ENCODE measurements at regions of chr7 and their contacts with region 1.

Region 1: GRCh38 chr7:100101016-100101862 is at the starts of genes AP4M1 and MCM7:
- DNase-seq: peak; percentile 98
- H3K4me3 ChIP-seq: peak within 1 kb of the TSS; percentile 74 to 96 (median 75)
- H3K27ac ChIP-seq: peak within 1 kb of the TSS; percentile 84
- H3K4me1 ChIP-seq: peaks cover 18% of the 10 kb centered on the region
- H3K27me3 ChIP-seq: no peaks in the 10 kb centered on the region
- CTCF ChIP-seq: no peak
- POLR2A ChIP-seq: peak; percentile 38
- total RNA-seq, gene AP4M1: 20.5 and 22.7 TPM in 2 replicates
- total RNA-seq, gene MCM7: 183 and 187 TPM in 2 replicates

Region 2: GRCh38 chr7:99848420-99849216 is 252.6 kb before region 1 on chr7:
- CTCF ChIA-PET with region 1: no interaction called
- POLR2A ChIA-PET with region 1: no interaction called
- dilution Hi-C with region 1: no loop called
- intact Hi-C with region 1: no loop called
- DNase-seq: no peak
- H3K4me3 ChIP-seq: no peak overlapping the region
- H3K27ac ChIP-seq: no peak overlapping the region
- H3K4me1 ChIP-seq: no peaks in the 10 kb centered on the region
- H3K27me3 ChIP-seq: peaks cover 2 to 4% of the 10 kb centered on the region in 2 experiments
- CTCF ChIP-seq: no peak
- POLR2A ChIP-seq: no peak

Region 3: DNA sequence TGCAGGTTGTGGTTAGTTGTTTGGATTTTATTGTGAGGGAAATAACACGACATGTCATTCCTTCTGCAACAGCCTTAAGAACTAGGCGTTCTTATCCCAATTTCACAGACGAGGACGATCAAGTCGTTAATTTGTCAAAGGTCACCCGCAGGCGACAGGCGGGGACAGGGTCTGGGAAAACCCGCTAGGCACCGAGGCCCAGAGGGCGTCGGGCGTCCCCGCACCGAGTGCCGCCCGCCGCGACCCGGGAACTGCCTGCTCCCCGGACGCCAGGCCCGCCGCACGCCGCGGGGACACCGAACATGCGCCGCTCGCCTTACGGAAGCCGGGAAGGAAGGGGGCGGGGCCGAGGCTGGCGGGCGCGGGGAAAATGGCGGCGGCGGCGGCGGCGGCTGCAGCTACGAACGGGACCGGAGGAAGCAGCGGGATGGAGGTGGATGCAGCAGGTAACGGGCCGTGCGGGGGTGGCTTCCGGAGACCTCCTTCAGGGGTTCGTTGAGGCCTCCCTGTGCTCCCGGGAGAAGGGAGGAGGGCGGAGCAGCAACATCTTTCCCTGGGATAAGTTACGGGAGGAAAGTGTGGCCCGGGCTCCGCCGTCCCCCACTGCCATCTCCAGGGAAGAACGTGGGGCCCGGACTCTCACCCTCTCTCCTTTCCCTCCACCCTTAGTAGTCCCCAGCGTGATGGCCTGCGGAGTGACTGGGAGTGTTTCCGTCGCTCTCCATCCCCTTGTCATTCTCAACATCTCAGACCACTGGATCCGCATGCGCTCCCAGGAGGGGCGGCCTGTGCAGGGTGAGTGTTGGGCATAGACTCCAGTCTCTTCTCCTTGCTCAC is 12.4 kb before region 1 on chr7 and contains the start of gene COPS6:
- CTCF ChIA-PET with region 1: interaction called, 18 read pairs
- POLR2A ChIA-PET with region 1: interaction called, 10 read pairs
- dilution Hi-C with region 1: no loop called
- intact Hi-C with region 1: loop called (anchors 1 kb)
- DNase-seq: peak; percentile 65
- H3K4me3 ChIP-seq: peak within 1 kb of the TSS; percentile 62 to 74 (median 68)
- H3K27ac ChIP-seq: peak within 1 kb of the TSS; percentile 94
- H3K4me1 ChIP-seq: peaks cover 39% of the 10 kb centered on the region
- H3K27me3 ChIP-seq: no peaks in the 10 kb centered on the region
- CTCF ChIP-seq: no peak
- POLR2A ChIP-seq: peak; percentile 84
- total RNA-seq, gene COPS6: 168 and 188 TPM in 2 replicates

Region 4: DNA sequence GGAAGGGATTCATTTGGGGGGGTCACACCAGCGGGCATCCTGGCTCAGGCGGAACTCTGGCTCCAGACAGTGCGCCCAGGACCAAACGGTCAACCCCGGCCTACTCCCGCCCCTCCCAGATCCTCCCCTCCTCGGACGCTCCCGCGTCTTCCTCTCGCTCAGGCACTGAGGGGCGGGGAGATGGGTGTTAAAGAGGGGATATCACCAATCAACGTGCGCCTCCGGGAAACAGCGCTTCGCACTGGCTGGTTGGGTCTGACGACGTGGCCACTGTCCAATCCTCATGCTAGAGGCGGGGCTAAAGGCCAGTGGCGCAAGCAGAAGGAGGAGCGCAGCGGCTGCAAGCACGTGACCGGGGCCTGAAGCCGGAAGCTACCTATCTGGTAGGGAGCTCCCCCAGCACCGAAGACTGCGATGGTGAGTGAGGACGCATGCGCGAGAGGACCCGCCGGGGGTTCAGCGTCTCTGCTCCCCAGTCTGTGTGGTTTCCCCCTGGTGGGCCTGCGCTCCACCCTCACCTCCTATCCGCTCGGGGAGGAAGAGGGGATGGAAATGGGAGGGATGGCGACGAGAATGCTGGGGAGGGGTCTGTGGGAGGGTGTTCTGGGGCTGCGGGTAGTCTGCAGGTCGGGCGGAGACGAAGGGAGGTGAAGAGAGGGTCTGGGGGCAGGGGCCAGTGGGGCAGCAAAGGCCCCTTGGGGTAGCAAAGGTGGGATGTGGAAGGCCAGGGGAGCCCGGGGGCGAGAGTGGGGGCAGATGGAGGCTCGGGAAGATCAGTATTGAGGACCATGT is 47.5 kb after region 1 on chr7 and contains the start of gene LAMTOR4:
- CTCF ChIA-PET with region 1: no interaction called
- POLR2A ChIA-PET with region 1: no interaction called
- dilution Hi-C with region 1: no loop called
- intact Hi-C with region 1: loop called (anchors 1 kb)
- DNase-seq: peak; percentile 99
- H3K4me3 ChIP-seq: peak within 1 kb of the TSS; percentile 70 to 82 (median 80)
- H3K27ac ChIP-seq: peak within 1 kb of the TSS; percentile 22
- H3K4me1 ChIP-seq: peaks cover 6% of the 10 kb centered on the region
- H3K27me3 ChIP-seq: no peaks in the 10 kb centered on the region
- CTCF ChIP-seq: no peak
- POLR2A ChIP-seq: peak; percentile 45
- total RNA-seq, gene LAMTOR4: 139 and 140 TPM in 2 replicates

Region 5: DNA sequence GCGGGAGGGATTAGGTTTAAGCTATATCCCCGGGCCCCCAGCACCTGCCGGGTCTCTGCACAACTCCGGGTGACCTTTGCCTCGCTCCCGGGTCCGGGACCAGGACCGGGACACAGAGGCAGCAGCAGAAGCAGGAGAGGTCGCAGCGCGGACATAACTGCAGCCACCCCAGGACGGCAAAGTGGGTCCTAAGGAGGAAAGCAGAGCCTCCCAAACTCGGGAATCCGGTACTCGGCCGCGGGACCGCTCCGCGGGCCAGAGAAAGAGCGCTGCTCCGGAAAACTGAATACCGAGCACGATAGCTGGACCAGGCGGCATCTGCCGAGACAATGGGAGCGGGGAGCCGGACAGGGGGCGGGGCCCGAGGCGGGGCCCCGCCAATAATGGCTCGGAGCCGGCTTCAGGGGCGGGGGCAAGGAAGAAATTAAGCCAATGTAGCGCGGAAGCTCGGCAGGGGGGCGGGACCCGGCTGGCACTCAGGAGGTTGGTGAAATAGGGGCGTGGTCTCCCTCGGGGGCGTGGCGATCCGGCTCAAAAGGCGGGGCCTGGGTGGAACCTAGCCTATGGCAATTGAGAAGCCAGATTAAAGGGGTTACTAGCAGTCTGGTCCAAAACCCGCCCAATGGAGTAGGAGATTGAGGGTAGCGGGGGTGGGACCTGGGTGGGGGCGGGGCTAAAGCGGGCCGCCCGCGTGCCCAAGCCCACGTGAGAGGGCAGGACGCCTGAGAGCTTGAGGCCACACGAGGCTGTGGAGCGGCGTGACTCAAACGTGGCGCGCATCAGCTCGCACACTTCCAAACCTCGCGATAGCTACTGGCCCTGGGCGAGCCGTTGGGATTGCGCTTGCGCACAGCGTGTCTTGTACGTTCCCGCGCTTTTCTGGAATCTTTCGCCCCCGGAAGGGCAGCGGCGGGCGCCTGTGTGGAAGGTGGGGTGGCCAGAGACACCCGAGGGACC is 76.1 kb after region 1 on chr7 and contains the starts of genes GPC2 and STAG3:
- CTCF ChIA-PET with region 1: no interaction called
- POLR2A ChIA-PET with region 1: no interaction called
- dilution Hi-C with region 1: no loop called
- intact Hi-C with region 1: loop called (anchors 2 kb)
- DNase-seq: peak; percentile 99
- H3K4me3 ChIP-seq: peak within 1 kb of the TSS; percentile 76 to 99 (median 91)
- H3K27ac ChIP-seq: peak within 1 kb of the TSS; percentile 47
- H3K4me1 ChIP-seq: peaks cover 5% of the 10 kb centered on the region
- H3K27me3 ChIP-seq: peaks cover 2 to 5% of the 10 kb centered on the region in 2 experiments
- CTCF ChIP-seq: no peak
- POLR2A ChIP-seq: peak; percentile 85
- total RNA-seq, gene GPC2: 17.5 and 20.9 TPM in 2 replicates
- total RNA-seq, gene STAG3: 0.55 and 1.4 TPM in 2 replicates

Measured in endothelial cell of umbilical vein (primary cell).